A673 (cell line): ENCODE measurements at regions of chr6 and their contacts with region 1.

Region 1: DNA sequence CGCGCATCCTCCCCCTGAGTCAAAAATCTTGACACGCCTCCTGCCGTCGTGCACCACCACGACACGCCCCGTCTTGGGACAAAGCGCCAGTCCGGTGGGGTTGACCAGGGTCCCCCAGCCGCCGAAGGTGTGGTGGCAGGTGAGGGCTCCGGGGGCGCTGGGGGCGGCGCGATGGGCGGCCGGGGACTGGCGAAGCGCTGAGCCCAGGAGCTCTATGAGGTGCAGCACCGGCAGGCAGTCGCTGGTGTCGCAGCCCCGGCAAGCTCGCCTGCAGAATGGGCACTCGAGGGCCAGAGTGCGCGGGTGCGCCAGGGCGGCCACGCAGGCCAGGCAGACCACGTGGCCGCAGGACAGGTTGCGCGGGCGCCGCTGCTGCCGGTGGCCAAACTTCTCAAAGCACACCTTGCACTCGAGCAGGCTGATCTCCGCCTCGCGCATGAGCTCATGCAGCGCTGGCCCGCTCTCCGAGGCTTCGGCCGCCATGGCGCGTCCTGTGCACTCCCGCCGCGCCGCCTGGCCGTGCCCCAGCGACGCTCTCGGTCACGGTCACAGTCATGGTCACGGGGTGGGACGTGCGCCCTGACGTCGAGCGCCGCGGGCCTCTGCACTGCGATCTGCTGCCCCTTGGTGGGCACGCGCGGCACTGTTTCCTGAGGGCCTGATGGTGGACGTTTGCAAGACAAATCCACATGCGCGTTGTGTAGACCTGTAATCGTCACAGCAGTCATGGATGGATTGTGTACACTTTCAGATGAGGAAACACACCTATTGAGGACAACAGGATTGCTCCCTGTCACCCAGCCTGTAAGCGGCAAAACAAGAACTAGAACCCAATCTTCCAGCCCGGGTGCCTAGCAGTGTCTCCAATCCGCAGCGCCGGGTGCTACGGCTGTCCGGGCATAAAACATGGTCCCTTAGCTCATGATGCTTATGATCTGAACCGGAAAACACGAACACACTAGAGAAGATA is at the start of gene NHLRC1:
- DNase-seq: peak; percentile 94
- H3K4me3 ChIP-seq: peak within 1 kb of the TSS; percentile 51
- H3K27ac ChIP-seq: peak within 1 kb of the TSS; percentile 64
- H3K4me1 ChIP-seq: peaks cover 11% of the 10 kb centered on the region
- H3K27me3 ChIP-seq: no peaks in the 10 kb centered on the region
- CTCF ChIP-seq: peak; percentile 96
- total RNA-seq, gene NHLRC1: 3.8 and 4.3 TPM in 2 replicates

Region 2: DNA sequence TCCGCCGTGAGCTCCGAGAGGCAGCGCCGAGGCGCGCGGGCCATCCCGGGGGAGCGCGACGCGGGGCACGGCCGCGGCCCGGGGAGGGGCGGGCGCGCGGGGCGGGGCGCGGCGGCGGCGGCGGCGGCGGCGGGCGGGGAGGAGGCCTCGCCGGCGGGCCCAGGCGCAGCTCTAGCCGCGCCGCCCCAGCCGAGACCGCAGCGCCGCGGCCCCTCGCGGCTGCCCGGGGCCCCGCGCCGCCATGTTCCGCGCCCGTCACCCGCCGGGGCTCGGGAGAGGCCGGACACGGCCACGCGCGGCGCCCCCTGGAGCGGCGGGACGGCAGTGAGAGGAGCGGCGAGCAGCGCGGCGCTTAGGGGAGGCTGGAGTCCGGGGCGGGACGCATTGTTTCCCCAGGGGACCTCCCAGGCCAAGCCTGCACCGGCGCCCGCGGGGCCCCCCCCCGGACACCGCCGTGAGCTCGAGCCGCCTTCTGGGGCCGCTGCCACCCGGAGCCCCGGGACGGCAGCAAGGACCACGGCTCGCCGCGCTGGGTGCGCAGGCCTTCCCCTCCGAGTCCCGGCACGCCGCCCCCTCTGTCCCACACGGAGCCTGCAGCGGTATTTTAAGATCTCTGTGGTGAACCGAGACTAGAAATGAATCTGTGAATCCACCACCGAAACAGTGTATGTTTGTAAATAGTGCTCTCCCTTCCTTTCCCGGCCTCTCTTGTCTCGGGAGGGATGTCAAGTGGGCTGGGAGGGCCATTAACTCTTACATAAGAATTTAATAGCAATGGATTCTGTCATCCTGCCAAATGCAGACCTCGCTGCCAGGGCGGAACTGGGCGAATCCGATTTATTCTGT is 134.6 kb before region 1 on chr6 and contains the start of gene KIF13A:
- CTCF ChIA-PET with region 1: no interaction called
- POLR2A ChIA-PET with region 1: no interaction called
- intact Hi-C with region 1: loop called (anchors 2 kb)
- DNase-seq: peak; percentile 79
- H3K4me3 ChIP-seq: peak within 1 kb of the TSS; percentile 66
- H3K27ac ChIP-seq: peak within 1 kb of the TSS; percentile 79
- H3K4me1 ChIP-seq: peaks cover 17% of the 10 kb centered on the region
- H3K27me3 ChIP-seq: no peaks in the 10 kb centered on the region
- CTCF ChIP-seq: no peak
- total RNA-seq, gene KIF13A: 19.7 and 21.1 TPM in 2 replicates